ENCODE measurements at regions of chr6 and their contacts with region 1.

Region 1: DNA sequence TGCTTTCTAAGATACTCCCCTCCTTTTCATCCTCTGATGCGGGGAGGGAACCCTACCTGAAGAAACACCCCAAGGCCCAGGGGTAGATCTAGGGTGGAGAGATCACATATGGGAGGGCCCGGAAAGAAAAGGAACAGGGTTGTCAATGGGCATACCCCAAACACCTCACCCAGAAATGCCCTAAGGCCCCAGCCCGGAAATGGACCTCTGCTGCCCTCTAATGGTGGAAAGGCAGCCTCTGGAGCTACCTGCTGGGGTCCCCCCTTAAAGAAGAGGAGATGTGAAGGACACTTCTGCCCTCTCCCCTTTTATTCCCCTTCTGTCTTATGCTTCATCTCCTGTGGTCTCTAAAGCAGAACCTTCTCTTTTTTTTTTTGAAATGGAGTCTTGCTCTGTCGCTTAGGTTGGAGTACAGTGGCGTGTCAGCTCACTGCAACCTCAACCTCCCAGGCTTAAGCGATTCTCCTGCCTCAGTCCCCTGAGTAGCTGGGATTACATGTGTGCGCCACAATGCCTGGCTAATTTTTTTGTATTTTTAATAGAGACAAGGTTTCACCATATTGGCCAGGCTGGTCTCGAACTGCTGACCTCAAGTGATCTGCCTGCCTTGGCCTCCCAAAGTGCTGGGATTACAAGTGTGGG is 458 bp upstream of the ARMC12 start:
- DNase-seq: peak in 1 of 2 donors; percentile 96
- H3K4me3 ChIP-seq: no peak overlapping the region
- CTCF ChIP-seq: peak in 1 of 3 donors; percentile 18
- POLR2A ChIP-seq: no peak

Region 2: DNA sequence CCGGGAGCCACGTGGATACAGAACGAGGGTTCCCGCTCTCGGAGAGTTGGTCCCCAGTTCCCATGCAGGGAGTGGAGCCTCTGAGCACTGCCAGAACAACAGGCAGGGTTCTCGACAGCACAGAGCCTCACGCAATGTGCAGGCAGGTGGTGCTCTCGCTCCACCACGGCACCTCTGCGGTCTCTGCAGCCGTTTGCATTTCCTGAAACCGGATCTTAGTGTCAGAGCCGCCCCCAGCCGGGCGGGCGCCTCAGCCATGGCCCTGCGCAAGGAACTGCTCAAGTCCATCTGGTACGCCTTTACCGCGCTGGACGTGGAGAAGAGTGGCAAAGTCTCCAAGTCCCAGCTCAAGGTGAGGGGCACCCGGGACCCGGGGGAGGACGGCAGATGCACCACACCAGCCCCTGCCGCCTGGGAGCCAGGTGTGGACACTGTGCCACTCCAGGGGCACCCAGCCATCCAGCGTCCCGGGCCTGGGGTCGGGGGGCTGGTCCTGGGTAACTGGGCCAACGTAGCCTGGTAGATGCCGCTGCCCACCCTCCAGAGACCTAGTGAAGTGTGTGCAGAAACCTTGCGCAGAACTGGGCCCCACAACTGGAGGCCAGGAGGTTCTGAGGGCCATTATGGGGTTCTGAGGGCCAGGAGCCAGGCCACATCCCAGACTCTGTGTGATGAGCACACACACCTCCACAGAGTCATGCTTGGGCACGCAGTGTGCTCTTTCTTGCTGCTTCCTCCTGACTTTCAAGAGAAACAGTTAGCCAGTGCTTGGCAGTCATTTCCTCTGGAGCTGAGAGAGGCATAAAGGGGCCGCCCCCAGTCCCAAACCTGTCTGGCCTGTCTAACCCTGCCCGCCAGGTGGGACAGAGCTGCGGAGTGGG is 438.5 kb before region 1 on chr6 and contains the start of gene DEF6:
- intact Hi-C with region 1: loop called (anchors 2 kb)
- DNase-seq: peak; percentile 80 to 95
- H3K4me3 ChIP-seq: peak within 1 kb of the TSS; percentile 30
- CTCF ChIP-seq: peak in 1 of 3 donors; percentile 41
- POLR2A ChIP-seq: no peak
- total RNA-seq, gene DEF6: 30.1 to 53.3 (median 39.4) TPM

Region 3: GRCh38 chr6:35522660-35523658 is 213.4 kb before region 1 on chr6:
- intact Hi-C with region 1: loop called (anchors 5 kb)
- DNase-seq: peak; percentile 68 to 95
- H3K4me3 ChIP-seq: no peak overlapping the region
- CTCF ChIP-seq: peak in 1 of 3 donors; percentile 74
- POLR2A ChIP-seq: no peak

Region 4: DNA sequence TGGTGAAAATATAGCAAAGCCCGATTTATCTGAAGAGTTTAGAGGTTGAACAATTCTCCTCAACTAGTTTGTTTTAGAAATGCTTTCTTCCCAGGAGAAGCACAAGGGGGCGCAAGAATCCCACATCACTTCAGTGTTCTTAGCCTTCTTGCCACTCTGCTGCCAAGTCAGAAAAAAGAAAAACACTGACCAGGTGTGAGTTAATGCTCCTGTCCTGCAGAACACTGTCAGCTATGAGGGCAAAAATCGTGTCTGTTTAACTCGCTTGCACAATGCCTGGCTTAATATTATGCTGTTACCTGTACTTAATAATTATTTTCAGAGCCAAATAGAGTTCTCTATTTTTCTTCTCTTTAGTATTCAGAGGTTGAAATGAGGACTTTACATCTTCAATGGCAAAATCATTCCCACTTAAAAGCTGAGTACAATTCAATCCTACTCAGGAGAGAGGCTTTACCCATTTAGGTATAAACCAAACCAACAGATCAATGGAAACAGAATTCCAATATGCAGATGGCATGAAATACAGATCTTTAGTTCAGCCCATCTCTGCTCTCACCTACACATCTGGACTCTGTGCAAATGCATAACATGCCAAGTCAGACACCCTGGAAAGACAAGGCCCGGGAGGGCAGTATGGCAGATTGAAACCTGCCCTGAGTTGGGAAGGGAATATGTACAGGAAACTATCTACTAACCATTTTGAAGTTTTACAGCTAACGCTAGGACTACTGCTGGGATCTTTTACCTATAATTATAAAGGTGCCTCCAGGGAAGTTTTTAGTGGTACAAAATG is 152.3 kb before region 1 on chr6:
- intact Hi-C with region 1: loop called (anchors 5 kb)
- DNase-seq: peak in 1 of 2 donors; percentile 61
- H3K4me3 ChIP-seq: no peak overlapping the region
- CTCF ChIP-seq: peak in 1 of 3 donors; percentile 54
- POLR2A ChIP-seq: no peak

Measured in lower leg skin (tissue), 4 donors.